Tibial artery (tissue), 4 donors: ENCODE measurements at regions of chr3 and their contacts with region 1.

Region 1: GRCh38 chr3:126134219-126134975 is 46.0 kb downstream of the ALDH1L1 start:
- DNase-seq: peak; percentile 61 to 74
- H3K4me3 ChIP-seq: no peak overlapping the region
- H3K27ac ChIP-seq: no peak overlapping the region
- H3K4me1 ChIP-seq: peaks cover 0 to 8% (median 3%) of the 10 kb centered on the region in 4 donors
- H3K27me3 ChIP-seq: peaks cover 0 to 2% of the 10 kb centered on the region in 2 donors
- CTCF ChIP-seq: peak; percentile 84 to 90

Region 2: DNA sequence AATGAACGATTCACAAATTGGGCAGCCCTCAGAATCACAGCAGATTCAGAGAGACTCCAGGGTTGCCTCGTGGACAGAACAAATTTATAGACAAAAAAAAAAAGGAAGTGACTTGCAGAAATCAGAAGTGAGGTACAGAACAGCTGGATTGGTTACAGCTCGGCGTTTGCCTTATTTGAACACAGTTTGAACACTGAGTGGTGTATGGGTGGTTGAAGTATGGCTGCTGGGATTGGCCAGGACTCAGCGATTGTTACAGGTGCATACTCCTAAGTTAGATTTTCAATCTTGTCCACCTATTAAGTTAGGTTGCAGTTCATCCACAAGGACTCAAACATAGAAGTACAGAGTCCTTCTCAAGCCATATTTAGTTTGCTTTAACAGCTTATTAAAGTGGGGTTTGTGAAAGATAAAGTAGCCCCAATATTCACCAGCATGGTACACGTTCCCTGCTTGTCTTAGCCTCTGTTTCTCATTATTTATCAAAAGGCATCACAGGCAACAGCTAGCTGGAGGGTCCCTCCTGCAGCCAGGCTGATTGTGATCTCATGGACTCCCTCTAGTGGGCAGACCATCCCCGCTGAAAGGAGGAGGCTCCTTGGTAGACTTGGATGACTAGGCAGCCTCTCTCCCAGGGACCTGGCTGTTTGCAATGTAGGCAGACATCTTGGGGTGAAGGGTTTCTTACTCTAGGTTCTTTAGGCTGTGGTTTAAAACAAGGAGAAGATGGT is 63.6 kb after region 1 on chr3:
- intact Hi-C with region 1: loop called (anchors 10 kb)
- DNase-seq: peak; percentile 85 to 86
- H3K4me3 ChIP-seq: no peak overlapping the region
- H3K27ac ChIP-seq: no peak overlapping the region
- H3K4me1 ChIP-seq: peaks cover 0 to 8% (median 0%) of the 10 kb centered on the region in 4 donors
- H3K27me3 ChIP-seq: no peaks in the 10 kb centered on the region
- CTCF ChIP-seq: peak; percentile 76 to 77

Region 3: DNA sequence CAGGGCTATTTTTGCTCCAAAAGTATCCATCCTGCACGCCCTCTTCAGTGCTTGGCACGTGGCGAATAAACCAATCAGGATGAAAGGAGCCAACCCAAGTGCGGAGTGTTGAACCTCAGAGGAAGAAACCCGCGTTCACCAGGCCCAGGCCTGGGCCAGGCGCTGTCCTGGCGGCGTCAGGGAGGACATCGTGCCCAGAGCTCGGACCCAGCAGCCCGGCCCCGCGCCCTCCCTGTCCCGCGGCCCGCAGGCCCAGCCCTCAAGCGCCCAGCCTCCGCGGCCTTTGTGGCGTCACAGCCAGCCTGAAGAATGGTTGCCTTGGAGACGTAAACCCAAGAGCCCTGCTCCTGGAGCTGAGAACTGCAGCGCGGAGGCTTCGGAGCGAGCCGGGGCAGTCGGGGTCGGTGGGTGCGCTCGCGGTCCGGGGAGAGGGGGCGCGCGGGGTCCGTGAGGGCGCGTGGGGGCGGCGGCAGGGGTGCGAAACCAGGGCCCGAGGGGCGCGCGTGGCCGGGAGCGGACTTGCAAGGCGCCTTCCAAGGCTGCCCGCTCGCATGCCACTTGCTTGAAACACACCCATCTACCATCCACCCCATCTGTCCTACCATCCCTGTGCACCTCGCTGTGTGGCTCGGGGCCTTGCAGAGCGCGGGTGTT is 260.3 kb after region 1 on chr3 and contains the start of gene CFAP100:
- intact Hi-C with region 1: loop called (anchors 5 kb)
- DNase-seq: peak; percentile 39 to 71
- H3K4me3 ChIP-seq: peak within 1 kb of the TSS; percentile 32 to 44
- H3K27ac ChIP-seq: peak within 1 kb of the TSS in 1 of 2 donors; percentile 22
- H3K4me1 ChIP-seq: peaks cover 0 to 10% (median 5%) of the 10 kb centered on the region in 4 donors
- H3K27me3 ChIP-seq: peaks cover 0 to 5% of the 10 kb centered on the region in 2 donors
- CTCF ChIP-seq: no peak